ENCODE measurements at regions of chr11 and their contacts with region 1.

Region 1: GRCh38 chr11:69683764-69684333 is 8.7 kb upstream of the LTO1 start:
- DNase-seq: peak in 1 of 2 experiments; percentile 80
- H3K4me3 ChIP-seq: no peak overlapping the region
- H3K27ac ChIP-seq: no peak overlapping the region
- H3K4me1 ChIP-seq: no peaks in the 10 kb centered on the region; a peak in 1 of 7 replicates
- H3K27me3 ChIP-seq: peaks cover 0 to 6% (median 3%) of the 10 kb centered on the region in 4 experiments; a peak in 4 of 7 replicates
- CTCF ChIP-seq: peak; percentile 65 to 74 (median 67)
- EP300 ChIP-seq: no peak
- POLR2A ChIP-seq: no peak
- RAD21 ChIP-seq: peak; percentile 70 to 79

Region 2: DNA sequence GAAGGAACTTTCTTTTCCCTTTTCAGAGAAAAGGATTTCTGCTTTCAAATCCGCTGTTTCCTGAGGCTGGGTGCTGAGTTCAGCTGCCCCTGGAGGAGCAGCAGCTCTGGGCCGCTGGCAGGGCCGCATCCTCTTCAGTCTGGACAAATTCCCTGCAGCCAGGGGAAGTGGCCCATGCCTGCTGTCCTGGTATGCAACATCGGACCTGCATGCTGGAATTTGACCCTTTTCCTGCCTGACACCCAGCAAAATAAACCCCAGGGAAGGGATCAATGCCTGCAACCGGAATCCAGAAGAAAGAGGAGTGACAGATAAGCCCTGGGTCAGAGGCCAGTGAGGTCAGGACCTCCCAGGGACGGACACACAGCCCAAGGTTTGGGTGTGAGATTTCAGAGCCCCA is 256.5 kb before region 1 on chr11:
- CTCF ChIA-PET with region 1: no interaction called
- POLR2A ChIA-PET with region 1: no interaction called
- DNase-seq: no peak
- H3K4me3 ChIP-seq: no peak overlapping the region
- H3K27ac ChIP-seq: no peak overlapping the region
- H3K4me1 ChIP-seq: peaks cover 0 to 6% (median 0%) of the 10 kb centered on the region in 4 experiments; a peak in 1 of 7 replicates
- H3K27me3 ChIP-seq: no peaks in the 10 kb centered on the region
- CTCF ChIP-seq: no peak
- EP300 ChIP-seq: no peak
- POLR2A ChIP-seq: no peak
- RAD21 ChIP-seq: no peak

Region 3: GRCh38 chr11:69670158-69670845 is 13.5 kb before region 1 on chr11:
- CTCF ChIA-PET with region 1: interaction called, 15 read pairs
- POLR2A ChIA-PET with region 1: no interaction called
- DNase-seq: peak in 1 of 2 experiments; percentile 90
- H3K4me3 ChIP-seq: no peak overlapping the region
- H3K27ac ChIP-seq: no peak overlapping the region
- H3K4me1 ChIP-seq: peaks cover 3 to 5% (median 4%) of the 10 kb centered on the region in 4 experiments
- H3K27me3 ChIP-seq: no peaks in the 10 kb centered on the region
- CTCF ChIP-seq: peak; percentile 87 to 99 (median 98)
- EP300 ChIP-seq: no peak
- POLR2A ChIP-seq: no peak
- RAD21 ChIP-seq: peak; percentile 88 to 89

Region 4: GRCh38 chr11:69696792-69697483 is 13.1 kb after region 1 on chr11:
- CTCF ChIA-PET with region 1: interaction called, 20 read pairs
- POLR2A ChIA-PET with region 1: interaction called, 8 read pairs
- DNase-seq: no peak
- H3K4me3 ChIP-seq: no peak overlapping the region
- H3K27ac ChIP-seq: no peak overlapping the region; the same call in 1 of the 2 replicates
- H3K4me1 ChIP-seq: peaks cover 6 to 25% (median 11%) of the 10 kb centered on the region in 4 experiments; a peak in 6 of 7 replicates
- H3K27me3 ChIP-seq: no peaks in the 10 kb centered on the region; a peak in 1 of 7 replicates
- CTCF ChIP-seq: no peak
- EP300 ChIP-seq: no peak
- POLR2A ChIP-seq: no peak
- RAD21 ChIP-seq: no peak

Measured in H1 (cell line).